ENCODE measurements at regions of chr1 and their contacts with region 1.

Region 1: DNA sequence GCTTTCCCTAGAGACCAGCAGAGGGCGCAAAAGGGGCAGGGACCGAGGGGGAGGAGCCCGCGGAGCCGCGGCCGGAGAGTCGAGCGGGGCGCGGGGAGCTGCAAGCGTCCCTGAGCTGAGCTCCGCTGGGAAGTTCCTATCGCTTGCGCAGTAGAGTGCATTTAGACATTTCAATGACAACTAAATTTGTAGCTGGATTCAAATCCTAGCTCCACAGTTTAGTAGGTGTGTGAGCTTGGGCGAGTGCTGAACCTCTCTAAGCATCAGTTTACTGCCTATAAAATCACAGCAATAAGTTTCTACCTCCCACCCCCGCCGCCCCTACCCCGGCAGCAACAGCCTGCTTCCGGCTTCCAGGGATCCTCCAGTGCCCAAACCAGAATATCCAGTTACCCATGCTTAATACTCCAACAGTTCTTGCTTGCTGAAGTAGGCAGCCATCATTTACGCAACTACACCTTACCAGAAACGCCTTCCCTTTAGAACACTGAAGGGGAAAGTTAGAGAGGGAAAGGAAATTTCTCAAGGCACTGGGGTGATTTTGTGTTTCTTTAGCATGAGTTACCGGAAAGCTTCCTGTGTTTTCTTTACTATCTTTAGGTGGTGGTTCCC is 9.1 kb downstream of the TLR5 start:
- DNase-seq: peak; percentile 91
- ATAC-seq: peak; percentile 78
- H3K4me3 Mint-ChIP-seq: peak overlapping the region; percentile 69
- H3K27ac Mint-ChIP-seq: peak overlapping the region; percentile 85
- H3K4me1 Mint-ChIP-seq: peaks cover 43% of the 10 kb centered on the region
- H3K27me3 Mint-ChIP-seq: peaks cover 40% of the 10 kb centered on the region
- CTCF ChIP-seq: no peak; the same call in none of the 2 replicates

Region 2: GRCh38 chr1:223029985-223030769 is 103.8 kb before region 1 on chr1:
- CTCF ChIA-PET with region 1: interaction called, 10 read pairs
- POLR2A ChIA-PET with region 1: no interaction called
- DNase-seq: peak; percentile 54
- ATAC-seq: peak; percentile 84
- H3K4me3 Mint-ChIP-seq: peak overlapping the region; percentile 99
- H3K27ac Mint-ChIP-seq: peak overlapping the region; percentile 100
- H3K4me1 Mint-ChIP-seq: peaks cover 60% of the 10 kb centered on the region
- H3K27me3 Mint-ChIP-seq: no peaks in the 10 kb centered on the region
- CTCF ChIP-seq: no peak

Region 3: DNA sequence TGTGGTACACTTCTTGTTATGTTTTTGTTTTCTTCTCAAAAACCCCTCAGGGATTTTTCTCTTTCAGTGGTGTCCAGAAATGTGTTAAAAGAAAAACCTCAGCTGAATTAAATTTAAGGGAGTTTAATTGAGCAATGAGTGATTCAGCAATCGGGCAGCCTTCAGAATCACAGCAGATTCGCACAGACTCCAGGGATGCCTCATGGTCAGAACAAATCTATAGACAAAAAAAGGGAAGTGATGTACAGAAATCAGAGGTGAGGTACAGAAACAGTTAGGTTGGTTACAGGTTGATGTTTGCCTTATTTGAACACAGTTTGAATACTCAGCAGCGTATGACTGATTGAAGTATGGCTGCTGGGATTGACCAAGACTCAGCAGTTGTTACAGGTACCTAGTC is 77.1 kb before region 1 on chr1:
- CTCF ChIA-PET with region 1: no interaction called
- POLR2A ChIA-PET with region 1: no interaction called
- DNase-seq: no peak
- ATAC-seq: no peak
- H3K4me3 Mint-ChIP-seq: no peak overlapping the region
- H3K27ac Mint-ChIP-seq: no peak overlapping the region
- H3K4me1 Mint-ChIP-seq: peaks cover 18% of the 10 kb centered on the region
- H3K27me3 Mint-ChIP-seq: no peaks in the 10 kb centered on the region; the same call in 1 of the 2 replicates
- CTCF ChIP-seq: no peak

Region 4: GRCh38 chr1:223123011-223123610 is 10.8 kb before region 1 on chr1:
- CTCF ChIA-PET with region 1: interaction called, 85 read pairs
- POLR2A ChIA-PET with region 1: no interaction called
- DNase-seq: no peak
- ATAC-seq: no peak
- H3K4me3 Mint-ChIP-seq: peak overlapping the region; percentile 20; the same call in 1 of the 2 replicates
- H3K27ac Mint-ChIP-seq: no peak overlapping the region
- H3K4me1 Mint-ChIP-seq: peaks cover 33% of the 10 kb centered on the region
- H3K27me3 Mint-ChIP-seq: peaks cover 13% of the 10 kb centered on the region
- CTCF ChIP-seq: no peak

Region 5: GRCh38 chr1:223319905-223320600 is 186.1 kb after region 1 on chr1:
- CTCF ChIA-PET with region 1: interaction called, 10 read pairs
- POLR2A ChIA-PET with region 1: no interaction called
- DNase-seq: no peak
- ATAC-seq: peak; percentile 94
- H3K4me3 Mint-ChIP-seq: no peak overlapping the region
- H3K27ac Mint-ChIP-seq: no peak overlapping the region
- H3K4me1 Mint-ChIP-seq: peaks cover 18% of the 10 kb centered on the region
- H3K27me3 Mint-ChIP-seq: no peaks in the 10 kb centered on the region
- CTCF ChIP-seq: no peak

Region 6: DNA sequence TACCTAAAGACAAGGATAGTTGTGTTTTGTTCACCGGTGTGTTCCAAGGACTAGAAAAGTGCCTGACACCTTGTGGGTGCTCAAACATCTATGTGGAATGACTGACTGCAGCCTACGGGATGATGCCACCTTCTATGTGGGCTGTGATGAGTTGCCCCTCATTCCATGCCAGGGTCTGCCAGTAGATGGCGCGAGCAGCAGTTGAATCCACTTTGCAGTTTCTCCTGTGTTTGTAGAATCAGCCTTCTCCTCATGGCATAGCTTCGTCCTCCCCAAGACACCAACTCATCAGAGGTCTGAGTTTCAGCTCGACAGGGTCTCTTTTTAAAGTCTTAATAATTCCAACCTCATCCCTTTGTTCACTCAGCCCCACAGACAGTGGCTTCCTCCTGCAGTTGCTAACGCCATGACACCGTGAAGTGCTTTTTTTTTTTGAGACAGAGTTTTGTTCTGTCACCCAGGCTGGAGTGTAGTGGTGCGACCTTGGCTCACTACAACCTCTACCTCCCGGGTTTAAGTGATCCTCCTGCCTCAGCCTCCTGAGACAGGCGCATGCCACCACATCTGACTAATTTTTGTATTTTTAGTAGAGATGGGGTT is 397.9 kb after region 1 on chr1:
- CTCF ChIA-PET with region 1: interaction called, 13 read pairs
- POLR2A ChIA-PET with region 1: no interaction called
- DNase-seq: peak; percentile 86
- ATAC-seq: peak; percentile 96
- H3K4me3 Mint-ChIP-seq: no peak overlapping the region
- H3K27ac Mint-ChIP-seq: no peak overlapping the region
- H3K4me1 Mint-ChIP-seq: peaks cover 10% of the 10 kb centered on the region
- H3K27me3 Mint-ChIP-seq: no peaks in the 10 kb centered on the region; the same call in 1 of the 2 replicates
- CTCF ChIP-seq: peak; percentile 62

Region 7: GRCh38 chr1:223683586-223684487 is 549.9 kb after region 1 on chr1:
- CTCF ChIA-PET with region 1: interaction called, 51 read pairs
- POLR2A ChIA-PET with region 1: no interaction called
- DNase-seq: peak; percentile 77
- ATAC-seq: peak; percentile 95
- H3K4me3 Mint-ChIP-seq: no peak overlapping the region
- H3K27ac Mint-ChIP-seq: no peak overlapping the region
- H3K4me1 Mint-ChIP-seq: no peaks in the 10 kb centered on the region
- H3K27me3 Mint-ChIP-seq: peaks cover 3% of the 10 kb centered on the region
- CTCF ChIP-seq: peak; percentile 75